PC-9 (cell line): ENCODE measurements at regions of chr5 and their contacts with region 1.

Region 1: GRCh38 chr5:74394916-74395781 is 245.4 kb downstream of the ENC1 start:
- DNase-seq: peak; percentile 91 to 99
- H3K4me3 ChIP-seq: no peak overlapping the region; the same call in 1 of the 2 replicates
- H3K27ac ChIP-seq: peak overlapping the region; percentile 82
- H3K4me1 ChIP-seq: peaks cover 42% of the 10 kb centered on the region
- H3K27me3 ChIP-seq: no peaks in the 10 kb centered on the region
- CTCF ChIP-seq: peak; percentile 61

Region 2: GRCh38 chr5:73938280-73938937 is 456.7 kb before region 1 on chr5:
- CTCF ChIA-PET with region 1: no interaction called
- POLR2A ChIA-PET with region 1: no interaction called
- intact Hi-C with region 1: loop called (anchors 1 kb)
- DNase-seq: peak; percentile 77 to 98
- H3K4me3 ChIP-seq: peak overlapping the region; percentile 28; the same call in 1 of the 2 replicates
- H3K27ac ChIP-seq: peak overlapping the region; percentile 98
- H3K4me1 ChIP-seq: peaks cover 33% of the 10 kb centered on the region
- H3K27me3 ChIP-seq: no peaks in the 10 kb centered on the region
- CTCF ChIP-seq: no peak

Region 3: DNA sequence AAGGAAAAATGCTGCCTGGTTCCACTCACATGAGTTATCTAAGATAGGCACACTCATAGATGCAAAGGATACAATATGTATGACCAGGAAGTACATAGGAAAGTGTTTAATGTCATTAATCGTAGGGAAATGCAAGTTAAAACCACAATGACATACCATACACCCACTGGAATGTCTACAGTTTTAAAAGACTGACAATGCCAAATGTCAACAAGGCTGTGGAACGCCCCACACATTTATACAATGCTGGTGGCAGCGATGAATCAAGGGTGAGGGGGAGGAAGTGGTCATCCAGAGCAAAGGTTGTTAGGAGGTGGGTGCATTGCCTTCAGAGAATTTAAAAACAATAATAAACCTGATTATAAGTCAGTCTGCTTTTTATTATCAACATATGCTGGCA is 331.3 kb before region 1 on chr5:
- CTCF ChIA-PET with region 1: no interaction called
- POLR2A ChIA-PET with region 1: no interaction called
- intact Hi-C with region 1: loop called (anchors 1 kb)
- DNase-seq: peak; percentile 70 to 98
- H3K4me3 ChIP-seq: no peak overlapping the region
- H3K27ac ChIP-seq: peak overlapping the region; percentile 79
- H3K4me1 ChIP-seq: peaks cover 52% of the 10 kb centered on the region
- H3K27me3 ChIP-seq: no peaks in the 10 kb centered on the region
- CTCF ChIP-seq: no peak

Region 4: GRCh38 chr5:74240786-74241750 is 154.1 kb before region 1 on chr5:
- CTCF ChIA-PET with region 1: no interaction called
- POLR2A ChIA-PET with region 1: no interaction called
- intact Hi-C with region 1: loop called (anchors 1 kb)
- DNase-seq: peak; percentile 50 to 96
- H3K4me3 ChIP-seq: peak overlapping the region; percentile 38; the same call in 1 of the 2 replicates
- H3K27ac ChIP-seq: peak overlapping the region; percentile 100
- H3K4me1 ChIP-seq: peaks cover 60% of the 10 kb centered on the region
- H3K27me3 ChIP-seq: no peaks in the 10 kb centered on the region
- CTCF ChIP-seq: 0 out of 2 replicates have a peak, but pooled peaks have one; percentile 11

Region 5: DNA sequence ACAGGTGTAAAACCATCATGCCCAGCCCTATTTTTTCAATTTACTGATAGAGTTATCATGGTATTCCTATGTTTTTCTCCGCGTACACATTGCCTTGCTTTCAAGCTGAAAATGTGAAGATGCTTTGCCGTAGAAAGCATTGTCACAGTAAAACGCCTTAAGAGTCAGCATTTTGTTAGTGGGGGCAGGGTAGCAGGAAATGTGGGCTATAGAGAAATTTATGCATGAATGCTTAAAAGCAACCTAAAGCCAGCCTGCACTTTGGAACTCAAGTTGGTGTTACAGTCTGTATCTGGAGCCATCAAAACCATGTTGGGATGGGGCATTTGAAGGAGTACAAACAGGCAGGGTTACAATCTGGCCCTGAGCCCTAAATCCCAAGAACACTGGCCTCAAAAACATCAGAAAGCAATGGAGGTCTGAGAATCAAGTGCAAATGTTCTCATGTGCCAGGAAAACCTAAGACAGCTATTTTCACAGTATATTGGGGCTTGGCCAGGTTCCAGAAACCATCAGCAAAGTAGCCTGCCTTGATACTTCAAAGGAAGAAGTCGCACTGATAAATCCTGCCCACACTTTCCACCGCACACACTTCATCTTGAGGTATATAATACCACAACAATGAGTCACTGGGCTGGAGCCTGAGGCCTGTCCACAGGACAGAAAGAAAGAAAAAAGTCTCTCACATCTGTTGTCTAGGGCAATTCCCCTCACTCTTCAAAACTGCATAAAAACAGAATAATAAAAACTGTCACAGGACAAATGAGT is 68.4 kb before region 1 on chr5:
- CTCF ChIA-PET with region 1: no interaction called
- POLR2A ChIA-PET with region 1: no interaction called
- intact Hi-C with region 1: loop called (anchors 1 kb)
- DNase-seq: peak; percentile 82 to 97
- H3K4me3 ChIP-seq: no peak overlapping the region
- H3K27ac ChIP-seq: peak overlapping the region; percentile 89
- H3K4me1 ChIP-seq: peaks cover 40% of the 10 kb centered on the region
- H3K27me3 ChIP-seq: no peaks in the 10 kb centered on the region
- CTCF ChIP-seq: no peak

Region 6: GRCh38 chr5:74543156-74543995 is 148.2 kb after region 1 on chr5:
- CTCF ChIA-PET with region 1: interaction called, 3 read pairs
- POLR2A ChIA-PET with region 1: interaction called, 4 read pairs
- intact Hi-C with region 1: loop called (anchors 1 kb)
- DNase-seq: peak; percentile 86 to 97
- H3K4me3 ChIP-seq: peak overlapping the region; percentile 31; the same call in 1 of the 2 replicates
- H3K27ac ChIP-seq: peak overlapping the region; percentile 95
- H3K4me1 ChIP-seq: peaks cover 73% of the 10 kb centered on the region
- H3K27me3 ChIP-seq: no peaks in the 10 kb centered on the region
- CTCF ChIP-seq: no peak

Region 7: GRCh38 chr5:75081510-75081909 is 686.4 kb after region 1 on chr5:
- CTCF ChIA-PET with region 1: no interaction called
- POLR2A ChIA-PET with region 1: no interaction called
- intact Hi-C with region 1: no loop called
- DNase-seq: no peak
- H3K4me3 ChIP-seq: no peak overlapping the region
- H3K27ac ChIP-seq: no peak overlapping the region
- H3K4me1 ChIP-seq: no peaks in the 10 kb centered on the region
- H3K27me3 ChIP-seq: no peaks in the 10 kb centered on the region
- CTCF ChIP-seq: no peak

Region 8: DNA sequence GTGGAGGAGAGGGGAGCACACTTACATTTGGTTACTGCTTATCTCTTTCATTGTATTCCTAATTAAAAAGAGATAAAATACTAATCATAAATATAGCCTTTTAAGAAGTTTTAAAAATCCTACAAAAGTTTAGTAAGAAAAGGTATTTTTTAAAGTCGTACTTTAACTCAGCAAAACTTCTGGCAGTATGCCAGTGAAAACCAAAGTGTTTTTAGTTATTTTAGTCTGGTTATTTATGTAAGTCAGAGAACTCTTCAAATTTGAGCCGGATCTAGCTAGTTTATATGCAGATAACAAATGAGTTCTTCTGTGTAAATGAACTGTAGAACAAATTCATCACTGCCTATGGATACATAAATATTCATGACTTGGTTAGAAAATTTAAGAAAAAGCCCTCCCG is 1179.6 kb after region 1 on chr5:
- CTCF ChIA-PET with region 1: no interaction called
- POLR2A ChIA-PET with region 1: no interaction called
- intact Hi-C with region 1: no loop called
- DNase-seq: no peak
- H3K4me3 ChIP-seq: no peak overlapping the region
- H3K27ac ChIP-seq: no peak overlapping the region
- H3K4me1 ChIP-seq: no peaks in the 10 kb centered on the region
- H3K27me3 ChIP-seq: no peaks in the 10 kb centered on the region
- CTCF ChIP-seq: no peak